Activated T-helper 1 cell treated with anti-CD3 and anti-CD28 coated beads, Interleukin-12 subunit alpha, Interleukin-12 subunit beta, Interleukin-2, Interleukin-4 antibody, amounts not matched to agents 30 ng/mL and 10 ng/mL and 1 ng/mL, durations not matched to agents 14 hours and 24 hours and 36 hours (primary cell): ENCODE measurements at regions of chrX and their contacts with region 1.

Region 1: GRCh38 chrX:40108959-40109287 is 11.2 kb upstream of the BCOR start:
- DNase-seq: peak; percentile 30
- H3K4me3 Mint-ChIP-seq: no peak overlapping the region
- H3K27ac Mint-ChIP-seq: no peak overlapping the region
- H3K4me1 Mint-ChIP-seq: peaks cover 6% of the 10 kb centered on the region
- H3K27me3 Mint-ChIP-seq: peaks cover 3% of the 10 kb centered on the region

Region 2: DNA sequence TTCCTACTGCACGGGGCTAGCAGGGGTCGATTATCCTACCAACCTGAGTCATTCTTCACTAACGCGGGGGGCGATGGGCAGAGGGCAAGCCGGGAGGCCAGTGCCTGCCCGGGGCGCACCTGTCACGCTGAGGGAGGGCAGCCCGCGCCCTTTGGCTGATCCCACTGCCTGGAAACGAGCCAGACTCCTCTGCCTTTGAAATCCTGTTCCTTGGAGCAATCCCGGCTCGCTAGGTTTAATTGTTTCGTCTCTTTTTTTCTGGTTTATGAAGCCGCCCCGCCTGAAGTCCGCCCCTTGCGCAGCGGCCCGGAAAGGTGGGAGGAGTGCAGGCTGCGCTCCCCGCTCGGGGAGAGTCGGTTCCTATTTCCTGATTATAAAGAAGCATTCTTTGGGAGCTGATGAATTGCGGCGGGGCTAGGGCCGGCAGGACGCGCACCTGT is 495.4 kb before region 1 on chrX:
- intact Hi-C with region 1: no loop called
- DNase-seq: peak; percentile 3
- H3K4me3 Mint-ChIP-seq: peak overlapping the region; percentile 87
- H3K27ac Mint-ChIP-seq: peak overlapping the region; percentile 95
- H3K4me1 Mint-ChIP-seq: peaks cover 42% of the 10 kb centered on the region
- H3K27me3 Mint-ChIP-seq: peaks cover 5% of the 10 kb centered on the region

Region 3: DNA sequence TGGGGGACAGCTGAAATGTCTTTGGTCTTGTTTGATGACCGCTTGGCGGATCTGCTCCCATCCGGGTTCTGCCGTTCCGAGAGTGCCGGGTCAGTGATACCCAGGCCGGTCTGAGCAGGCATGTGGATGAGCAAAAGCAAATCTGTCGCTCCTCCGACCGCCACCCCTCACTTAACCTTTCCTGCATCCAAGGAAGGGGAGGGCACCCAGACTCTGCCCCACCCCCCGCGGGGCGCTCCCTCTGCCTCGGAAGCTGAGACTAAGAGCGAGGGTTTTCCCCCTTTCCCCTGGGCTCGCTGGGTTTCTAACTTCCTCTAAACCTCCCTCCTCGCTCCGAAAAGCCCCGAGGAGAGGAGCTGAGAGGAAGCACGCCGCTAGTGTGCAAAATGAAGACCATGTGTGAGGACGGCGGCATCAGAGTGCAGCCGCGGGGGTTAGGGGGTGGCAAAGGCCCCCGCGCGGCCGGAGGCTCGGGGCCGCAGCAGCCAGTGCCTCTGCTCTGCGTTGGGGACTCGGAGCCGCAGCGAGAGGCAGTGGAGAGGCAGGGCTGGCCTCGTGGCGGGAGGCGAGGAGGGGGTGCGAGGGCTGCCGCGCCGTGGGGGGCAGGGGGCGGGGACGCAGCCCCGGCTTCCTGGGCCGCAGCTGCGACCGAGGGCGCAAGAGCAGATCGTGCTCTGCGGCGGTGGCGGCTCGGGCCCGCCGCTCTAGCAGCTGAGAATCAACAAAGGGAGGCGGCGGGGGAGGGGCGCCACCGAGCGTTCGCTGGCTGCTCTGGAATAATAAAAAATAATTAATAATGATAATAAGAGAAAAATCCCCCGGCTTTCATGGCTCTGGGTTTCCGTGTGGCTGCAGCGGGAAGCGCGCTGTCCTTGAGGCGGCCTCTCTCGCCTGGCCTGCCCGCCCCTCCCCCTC is 44.7 kb after region 1 on chrX:
- intact Hi-C with region 1: loop called (anchors 1 kb)
- DNase-seq: peak; percentile 40
- H3K4me3 Mint-ChIP-seq: peak overlapping the region; percentile 81
- H3K27ac Mint-ChIP-seq: peak overlapping the region; percentile 86
- H3K4me1 Mint-ChIP-seq: peaks cover 12% of the 10 kb centered on the region
- H3K27me3 Mint-ChIP-seq: peaks cover under 1% of the 10 kb centered on the region